ENCODE measurements at regions of chr7 and their contacts with region 1.

Region 1: GRCh38 chr7:44490351-44491200 is at the start of gene NUDCD3:
- DNase-seq: peak; percentile 84
- H3K27ac ChIP-seq: peak within 1 kb of the TSS; percentile 93
- CTCF ChIP-seq: no peak; the same call in 1 of the 2 replicates

Region 2: GRCh38 chr7:44565097-44565794 is 74.7 kb after region 1 on chr7:
- CTCF ChIA-PET with region 1: interaction called, 15 read pairs
- POLR2A ChIA-PET with region 1: no interaction called
- DNase-seq: peak; percentile 61
- H3K27ac ChIP-seq: peak overlapping the region; percentile 63
- CTCF ChIP-seq: peak; percentile 99

Region 3: GRCh38 chr7:44761207-44762161 is 270.9 kb after region 1 on chr7:
- CTCF ChIA-PET with region 1: no interaction called
- POLR2A ChIA-PET with region 1: interaction called, 11 read pairs
- DNase-seq: peak; percentile 75
- H3K27ac ChIP-seq: peak overlapping the region; percentile 77
- CTCF ChIP-seq: no peak